ENCODE measurements at regions of chr17 and their contacts with region 1.

Region 1: GRCh38 chr17:28612936-28613872 is 781 bp downstream of the RSKR start:
- DNase-seq: no peak
- H3K4me3 ChIP-seq: no peak overlapping the region
- CTCF ChIP-seq: peak; percentile 69

Region 2: GRCh38 chr17:28623696-28624095 is 10.5 kb after region 1 on chr17:
- CTCF ChIA-PET with region 1: interaction called, 100 read pairs
- POLR2A ChIA-PET with region 1: interaction called, 5 read pairs
- DNase-seq: no peak
- H3K4me3 ChIP-seq: no peak overlapping the region
- CTCF ChIP-seq: no peak

Region 3: GRCh38 chr17:28634206-28634856 is 21.1 kb after region 1 on chr17:
- CTCF ChIA-PET with region 1: interaction called, 13 read pairs
- POLR2A ChIA-PET with region 1: no interaction called
- DNase-seq: no peak
- H3K4me3 ChIP-seq: no peak overlapping the region
- CTCF ChIP-seq: no peak

Measured in AG04449 (cell line).